Activated B cell treated with CpG ODN at 0.5 μM for 24 hours (primary cell): ENCODE measurements at regions of chr9 and their contacts with region 1.

Region 1: GRCh38 chr9:36102742-36103495 is 33.6 kb upstream of the GLIPR2 start:
- DNase-seq: peak; percentile 68
- ATAC-seq: peak; percentile 100
- H3K4me3 Mint-ChIP-seq: no peak overlapping the region
- H3K27ac Mint-ChIP-seq: no peak overlapping the region
- H3K4me1 Mint-ChIP-seq: peaks cover 2% of the 10 kb centered on the region
- H3K27me3 Mint-ChIP-seq: no peaks in the 10 kb centered on the region
- CTCF ChIP-seq: peak; percentile 61

Region 2: GRCh38 chr9:36092509-36093215 is 10.3 kb before region 1 on chr9:
- CTCF ChIA-PET with region 1: interaction called, 11 read pairs
- POLR2A ChIA-PET with region 1: interaction called, 3 read pairs
- intact Hi-C with region 1: no loop called
- DNase-seq: no peak
- ATAC-seq: peak; percentile 98
- H3K4me3 Mint-ChIP-seq: peak overlapping the region; percentile 58
- H3K27ac Mint-ChIP-seq: peak overlapping the region; percentile 85
- H3K4me1 Mint-ChIP-seq: peaks cover 16% of the 10 kb centered on the region
- H3K27me3 Mint-ChIP-seq: no peaks in the 10 kb centered on the region
- CTCF ChIP-seq: no peak

Region 3: GRCh38 chr9:36136272-36136893 is 33.5 kb after region 1 on chr9 and contains the start of gene GLIPR2:
- CTCF ChIA-PET with region 1: interaction called, 8 read pairs
- POLR2A ChIA-PET with region 1: interaction called, 5 read pairs
- intact Hi-C with region 1: loop called (anchors 1 kb)
- DNase-seq: peak; percentile 79
- ATAC-seq: peak; percentile 98
- H3K4me3 Mint-ChIP-seq: peak within 1 kb of the TSS; percentile 87
- H3K27ac Mint-ChIP-seq: peak within 1 kb of the TSS; percentile 88
- H3K4me1 Mint-ChIP-seq: peaks cover 53% of the 10 kb centered on the region
- H3K27me3 Mint-ChIP-seq: no peaks in the 10 kb centered on the region
- CTCF ChIP-seq: no peak
- total RNA-seq, gene GLIPR2: 13.6 and 14.3 TPM in 2 replicates

Region 4: GRCh38 chr9:36148311-36149051 is 45.6 kb after region 1 on chr9:
- CTCF ChIA-PET with region 1: interaction called, 11 read pairs
- POLR2A ChIA-PET with region 1: interaction called, 4 read pairs
- intact Hi-C with region 1: no loop called
- DNase-seq: no peak
- ATAC-seq: no peak
- H3K4me3 Mint-ChIP-seq: no peak overlapping the region
- H3K27ac Mint-ChIP-seq: no peak overlapping the region
- H3K4me1 Mint-ChIP-seq: peaks cover 81% of the 10 kb centered on the region
- H3K27me3 Mint-ChIP-seq: no peaks in the 10 kb centered on the region
- CTCF ChIP-seq: no peak

Region 5: GRCh38 chr9:36328798-36329411 is 226.0 kb after region 1 on chr9:
- CTCF ChIA-PET with region 1: interaction called, 13 read pairs
- POLR2A ChIA-PET with region 1: no interaction called
- intact Hi-C with region 1: loop called (anchors 1 kb)
- DNase-seq: no peak
- ATAC-seq: peak; percentile 77
- H3K4me3 Mint-ChIP-seq: no peak overlapping the region
- H3K27ac Mint-ChIP-seq: no peak overlapping the region
- H3K4me1 Mint-ChIP-seq: peaks cover 2% of the 10 kb centered on the region
- H3K27me3 Mint-ChIP-seq: no peaks in the 10 kb centered on the region
- CTCF ChIP-seq: peak; percentile 65